ENCODE measurements at regions of chr17 and their contacts with region 1.

Region 1: DNA sequence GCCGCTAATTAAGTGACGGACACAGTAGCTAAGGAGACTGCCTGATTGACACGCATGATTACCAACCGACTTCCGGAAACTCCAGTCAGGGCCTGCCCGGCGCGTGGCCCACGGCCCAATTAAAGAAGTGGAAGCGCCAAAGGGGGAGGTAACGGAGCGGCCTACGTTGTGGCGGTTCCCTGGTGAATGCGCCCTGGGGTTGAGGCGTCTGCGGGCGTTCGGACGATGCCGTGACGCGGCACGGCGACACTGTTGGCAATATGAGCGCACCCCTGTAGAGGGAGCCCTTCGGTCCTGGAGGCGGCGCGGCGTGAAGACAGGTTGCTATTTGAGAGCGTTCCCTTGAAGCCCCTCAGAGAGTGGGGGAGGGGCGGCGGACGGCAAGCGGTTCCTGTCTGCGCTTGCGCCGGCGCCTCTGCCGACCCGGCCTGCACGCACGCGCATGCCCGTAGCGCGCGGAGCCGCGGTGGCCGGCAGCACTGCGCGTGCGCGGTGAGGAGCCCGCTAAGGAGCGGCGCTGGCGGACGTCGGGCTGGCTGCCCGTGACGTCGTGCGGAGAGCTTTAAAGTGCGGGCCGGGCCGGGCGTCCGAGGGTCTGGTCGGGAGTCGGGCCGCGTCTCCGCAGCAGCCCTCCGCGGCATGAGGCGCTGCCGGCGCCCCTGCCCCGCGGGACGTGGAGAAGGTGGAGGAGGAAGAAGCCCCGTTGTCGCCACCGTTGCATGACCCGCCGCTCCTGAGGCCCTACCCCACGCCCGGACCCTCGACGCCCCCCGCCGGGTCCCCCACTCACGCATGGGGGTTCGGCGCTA is at the start of gene ALKBH5:
- DNase-seq: peak; percentile 95 to 99 (median 98)
- ATAC-seq: peak; percentile 85 to 87 (median 86)
- H3K4me3 ChIP-seq: peak within 1 kb of the TSS; percentile 77 to 81
- H3K4me3 Mint-ChIP-seq: peak within 1 kb of the TSS; percentile 93 to 96 (median 95)
- H3K27ac ChIP-seq: peak within 1 kb of the TSS; percentile 88
- H3K27ac Mint-ChIP-seq: peak within 1 kb of the TSS; percentile 95 to 99
- H3K4me1 ChIP-seq: peaks cover 28 to 53% of the 10 kb centered on the region in 2 experiments
- H3K4me1 Mint-ChIP-seq: peaks cover 45 to 51% (median 45%) of the 10 kb centered on the region in 3 donors
- H3K27me3 ChIP-seq: no peaks in the 10 kb centered on the region
- H3K27me3 Mint-ChIP-seq: no peaks in the 10 kb centered on the region
- total RNA-seq, gene ALKBH5: 99.0 to 122 (median 103) TPM

Region 2: GRCh38 chr17:17985555-17985954 is 198.0 kb before region 1 on chr17:
- CTCF ChIA-PET with region 1: no interaction called
- POLR2A ChIA-PET with region 1: no interaction called
- DNase-seq: peak in 1 of 35 experiments; percentile 16
- ATAC-seq: no peak
- H3K4me3 ChIP-seq: no peak overlapping the region
- H3K4me3 Mint-ChIP-seq: no peak overlapping the region
- H3K27ac ChIP-seq: no peak overlapping the region
- H3K27ac Mint-ChIP-seq: no peak overlapping the region
- H3K4me1 ChIP-seq: no peaks in the 10 kb centered on the region
- H3K4me1 Mint-ChIP-seq: no peaks in the 10 kb centered on the region
- H3K27me3 ChIP-seq: no peaks in the 10 kb centered on the region
- H3K27me3 Mint-ChIP-seq: no peaks in the 10 kb centered on the region

Region 3: DNA sequence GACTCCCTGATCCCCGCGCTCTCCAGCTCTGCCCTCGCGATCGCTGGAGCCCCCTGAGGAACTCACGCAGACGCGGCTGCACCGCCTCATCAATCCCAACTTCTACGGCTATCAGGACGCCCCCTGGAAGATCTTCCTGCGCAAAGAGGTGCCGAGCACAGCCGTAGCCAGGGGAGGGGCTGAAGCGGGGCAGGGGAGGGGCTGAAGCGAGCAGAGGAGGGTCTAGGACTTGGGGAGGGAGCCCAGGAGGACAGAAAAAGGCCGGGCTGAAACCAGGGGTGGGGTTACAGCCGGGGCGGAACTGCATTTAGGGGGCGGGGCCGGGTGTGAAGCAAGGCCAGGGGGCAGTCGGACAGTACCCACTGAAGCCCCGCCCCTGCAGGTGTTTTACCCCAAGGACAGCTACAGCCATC is 29.8 kb before region 1 on chr17:
- CTCF ChIA-PET with region 1: interaction called, 4 to 12 read pairs
- POLR2A ChIA-PET with region 1: interaction called in 1 of 2 experiments, 7 read pairs
- DNase-seq: peak in 34 of 35 experiments; percentile 6 to 56 (median 31)
- ATAC-seq: peak; percentile 50 to 61 (median 55)
- H3K4me3 ChIP-seq: peak overlapping the region; percentile 19 to 44
- H3K4me3 Mint-ChIP-seq: peak overlapping the region; percentile 79 to 84 (median 81)
- H3K27ac ChIP-seq: no peak overlapping the region
- H3K27ac Mint-ChIP-seq: peak overlapping the region; percentile 49 to 64
- H3K4me1 ChIP-seq: peaks cover 0 to 25% of the 10 kb centered on the region in 2 experiments
- H3K4me1 Mint-ChIP-seq: peaks cover 12 to 25% (median 24%) of the 10 kb centered on the region in 3 donors
- H3K27me3 ChIP-seq: peaks cover 0 to 12% of the 10 kb centered on the region in 2 experiments
- H3K27me3 Mint-ChIP-seq: no peaks in the 10 kb centered on the region